CD8-positive, alpha-beta T cell (primary cell): ENCODE measurements at regions of chr5 and their contacts with region 1.

Region 1: DNA sequence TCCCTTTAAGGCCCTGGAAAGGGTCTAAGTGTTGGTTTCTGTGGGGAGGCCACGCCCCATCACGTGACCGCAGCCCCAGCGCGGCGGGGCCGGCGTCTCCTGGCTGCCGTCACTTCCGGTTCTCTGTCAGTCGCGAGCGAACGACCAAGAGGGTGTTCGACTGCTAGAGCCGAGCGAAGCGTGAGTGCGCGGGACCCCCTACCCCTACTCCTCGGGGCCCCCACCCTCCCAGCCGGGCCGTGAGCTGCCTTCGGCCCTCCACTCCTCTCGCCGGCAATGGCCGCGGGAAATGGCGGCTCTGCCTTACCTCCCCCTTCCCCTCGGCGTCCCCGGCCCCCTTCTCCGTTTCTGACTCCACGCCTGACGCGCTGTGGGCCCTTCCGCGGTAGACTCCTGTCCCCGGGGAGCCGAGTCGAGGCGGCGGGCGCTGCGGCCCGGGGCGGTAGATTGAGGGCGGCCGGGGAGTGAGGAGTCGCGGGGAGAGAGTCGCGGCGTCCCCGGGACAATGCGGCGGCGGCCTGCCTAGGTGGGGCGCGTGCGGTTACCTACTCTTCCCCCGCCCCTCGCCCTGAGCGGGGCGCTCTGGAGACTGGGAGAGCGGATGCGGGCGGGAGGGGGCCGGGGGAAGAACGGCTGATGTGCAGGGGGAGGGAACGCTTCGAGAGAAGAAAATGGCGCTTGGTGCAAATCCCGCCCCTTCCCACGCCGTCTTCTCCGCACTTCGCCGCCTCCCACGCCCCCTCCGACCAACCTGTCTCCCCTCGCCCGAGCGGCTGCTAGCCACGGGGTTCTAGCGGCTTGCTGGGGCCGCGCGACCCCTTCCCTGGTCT is at the start of gene SUB1:
- DNase-seq: peak; percentile 89 to 97 (median 95)
- ATAC-seq: peak; percentile 90
- H3K4me3 ChIP-seq: peak within 1 kb of the TSS; percentile 94 to 97
- H3K4me3 Mint-ChIP-seq: peak within 1 kb of the TSS; percentile 96
- H3K27ac ChIP-seq: peak within 1 kb of the TSS; percentile 100
- H3K27ac Mint-ChIP-seq: peak within 1 kb of the TSS; percentile 95
- H3K4me1 ChIP-seq: peaks cover 29% of the 10 kb centered on the region
- H3K4me1 Mint-ChIP-seq: peaks cover 54% of the 10 kb centered on the region
- H3K27me3 ChIP-seq: no peaks in the 10 kb centered on the region
- H3K27me3 Mint-ChIP-seq: no peaks in the 10 kb centered on the region
- CTCF ChIP-seq: no peak
- total RNA-seq, gene SUB1: 361 to 370 TPM

Region 2: GRCh38 chr5:31531888-31532710 is 1053.6 kb before region 1 on chr5 and contains the starts of genes C5orf22 and DROSHA:
- CTCF ChIA-PET with region 1: no interaction called
- POLR2A ChIA-PET with region 1: no interaction called
- intact Hi-C with region 1: loop called (anchors 2 to 5 kb)
- DNase-seq: peak; percentile 72 to 96 (median 91)
- ATAC-seq: peak; percentile 97
- H3K4me3 ChIP-seq: peak within 1 kb of the TSS; percentile 87 to 91
- H3K4me3 Mint-ChIP-seq: peak within 1 kb of the TSS; percentile 99
- H3K27ac ChIP-seq: peak within 1 kb of the TSS; percentile 63 to 75
- H3K27ac Mint-ChIP-seq: peak within 1 kb of the TSS; percentile 92
- H3K4me1 ChIP-seq: peaks cover 34% of the 10 kb centered on the region
- H3K4me1 Mint-ChIP-seq: peaks cover 59% of the 10 kb centered on the region
- H3K27me3 ChIP-seq: no peaks in the 10 kb centered on the region
- H3K27me3 Mint-ChIP-seq: no peaks in the 10 kb centered on the region
- CTCF ChIP-seq: no peak
- total RNA-seq, gene C5orf22: 11.4 to 14.2 TPM
- total RNA-seq, gene DROSHA: 18.6 to 21.6 TPM

Region 3: DNA sequence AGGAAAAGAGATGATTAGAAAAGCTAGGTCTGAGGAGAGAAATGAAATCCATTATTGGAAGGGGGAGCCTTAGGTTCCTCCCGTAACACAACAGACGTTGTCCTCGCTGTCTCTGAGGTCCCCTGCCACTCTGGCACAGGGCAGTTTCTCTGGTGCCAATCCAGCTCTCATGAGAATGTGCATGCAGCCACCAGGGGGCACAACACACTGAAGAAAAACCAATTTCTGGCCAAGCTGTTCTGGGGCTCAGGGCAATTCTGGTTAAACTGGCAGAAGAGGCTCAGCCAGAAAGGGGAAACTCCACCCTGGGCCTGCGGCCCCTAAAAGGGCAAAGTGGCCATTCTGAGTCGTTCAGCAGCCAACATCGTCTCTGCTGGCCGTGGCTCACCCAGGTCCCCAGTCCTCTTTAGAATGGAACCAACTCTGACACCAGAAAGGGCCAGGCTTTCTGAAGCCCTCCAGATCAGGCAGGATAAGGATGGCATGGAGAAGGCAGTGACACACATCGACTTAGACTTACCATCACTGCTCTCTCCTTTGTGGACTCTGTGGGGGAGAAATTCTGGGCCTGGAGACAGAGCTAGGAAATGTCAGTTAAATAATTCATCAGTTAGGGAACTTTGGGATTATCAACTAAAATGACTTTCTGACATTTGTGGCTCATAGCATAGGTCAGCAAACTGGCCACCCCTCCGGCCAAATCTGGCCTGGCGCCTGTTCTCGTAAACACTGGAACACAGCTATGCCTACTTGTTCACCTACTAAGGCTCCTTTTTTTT is 353.0 kb before region 1 on chr5:
- CTCF ChIA-PET with region 1: interaction called, 16 read pairs
- POLR2A ChIA-PET with region 1: no interaction called
- intact Hi-C with region 1: no loop called
- DNase-seq: peak; percentile 54 to 86 (median 76)
- ATAC-seq: peak; percentile 88
- H3K4me3 ChIP-seq: no peak overlapping the region
- H3K4me3 Mint-ChIP-seq: no peak overlapping the region
- H3K27ac ChIP-seq: peak overlapping the region in 1 of 2 experiments; percentile 23
- H3K27ac Mint-ChIP-seq: peak overlapping the region; percentile 79
- H3K4me1 ChIP-seq: no peaks in the 10 kb centered on the region
- H3K4me1 Mint-ChIP-seq: no peaks in the 10 kb centered on the region
- H3K27me3 ChIP-seq: no peaks in the 10 kb centered on the region
- H3K27me3 Mint-ChIP-seq: no peaks in the 10 kb centered on the region
- CTCF ChIP-seq: peak; percentile 61

Region 4: DNA sequence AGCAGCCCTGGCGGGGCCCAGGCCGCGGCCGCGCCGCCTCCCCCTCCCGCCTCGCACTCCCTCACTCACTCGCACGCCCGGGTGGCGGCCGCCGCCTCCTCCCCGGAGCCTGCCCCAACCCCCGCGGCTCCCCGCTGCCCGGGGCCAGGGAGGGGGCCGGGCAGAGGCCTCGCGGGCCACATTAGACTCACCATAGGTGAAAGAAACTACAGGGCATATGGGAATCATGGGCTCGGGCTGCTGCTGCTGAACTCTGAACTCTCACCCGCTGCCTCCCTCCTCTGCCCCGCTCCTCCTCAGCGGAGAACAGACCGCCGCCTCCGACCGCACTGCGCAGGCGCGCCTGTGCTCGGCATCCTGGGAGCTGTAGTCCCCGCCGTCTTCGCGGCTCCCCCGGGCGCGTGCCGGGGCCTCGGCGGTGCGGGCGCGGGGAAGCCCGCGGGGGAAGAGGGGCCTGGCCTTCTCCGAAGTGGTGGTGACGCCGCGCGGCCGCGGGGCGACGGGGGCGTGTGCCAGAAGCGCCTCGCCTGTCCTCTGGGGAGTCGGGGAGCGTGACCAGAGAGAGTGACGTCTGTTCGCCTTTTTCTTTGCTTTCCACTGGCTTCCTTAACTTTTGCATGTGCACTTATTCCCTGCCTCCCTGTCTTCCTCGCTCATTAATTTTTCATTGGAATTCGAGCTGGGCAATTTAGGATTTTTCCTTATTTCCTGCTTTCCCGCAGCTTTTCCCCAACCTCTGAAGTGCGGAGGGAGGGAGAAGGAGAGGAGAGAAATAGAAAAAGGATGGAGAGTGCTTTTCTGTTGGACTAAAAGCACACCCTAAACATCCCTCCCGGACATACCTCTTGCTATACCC is 141.0 kb before region 1 on chr5 and contains the start of gene ZFR:
- CTCF ChIA-PET with region 1: interaction called, 4 read pairs
- POLR2A ChIA-PET with region 1: interaction called, 11 read pairs
- intact Hi-C with region 1: loop called (anchors 1 kb)
- DNase-seq: peak; percentile 86 to 97 (median 92)
- ATAC-seq: peak; percentile 88
- H3K4me3 ChIP-seq: peak within 1 kb of the TSS; percentile 95 to 97
- H3K4me3 Mint-ChIP-seq: peak within 1 kb of the TSS; percentile 90
- H3K27ac ChIP-seq: peak within 1 kb of the TSS; percentile 81 to 90
- H3K27ac Mint-ChIP-seq: peak within 1 kb of the TSS; percentile 95
- H3K4me1 ChIP-seq: peaks cover 30% of the 10 kb centered on the region
- H3K4me1 Mint-ChIP-seq: peaks cover 27% of the 10 kb centered on the region
- H3K27me3 ChIP-seq: no peaks in the 10 kb centered on the region
- H3K27me3 Mint-ChIP-seq: no peaks in the 10 kb centered on the region
- CTCF ChIP-seq: no peak
- total RNA-seq, gene ZFR: 54.0 to 62.9 TPM

Region 5: DNA sequence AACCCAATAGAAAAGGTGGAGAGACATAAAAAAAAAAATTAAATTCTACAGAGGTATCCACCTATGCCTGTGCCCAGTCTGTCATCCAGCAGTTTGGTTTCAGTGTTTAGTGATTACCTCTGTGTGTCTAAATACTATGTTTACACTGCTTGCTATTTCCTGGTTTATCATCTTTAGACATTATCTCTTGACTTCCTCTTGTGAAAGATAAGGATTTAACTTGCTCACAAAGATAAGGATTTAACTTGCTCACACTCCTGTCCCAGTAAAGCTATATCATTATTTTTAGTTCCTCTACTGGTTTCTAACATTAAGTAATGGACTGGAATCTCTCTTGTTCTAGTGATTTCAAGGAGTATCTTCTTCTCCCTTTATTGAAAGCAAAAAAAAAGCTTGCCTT is 87.2 kb before region 1 on chr5:
- CTCF ChIA-PET with region 1: interaction called, 21 read pairs
- POLR2A ChIA-PET with region 1: interaction called, 3 read pairs
- intact Hi-C with region 1: no loop called
- DNase-seq: no peak
- ATAC-seq: no peak
- H3K4me3 ChIP-seq: no peak overlapping the region
- H3K4me3 Mint-ChIP-seq: no peak overlapping the region
- H3K27ac ChIP-seq: no peak overlapping the region
- H3K27ac Mint-ChIP-seq: no peak overlapping the region
- H3K4me1 ChIP-seq: no peaks in the 10 kb centered on the region
- H3K4me1 Mint-ChIP-seq: no peaks in the 10 kb centered on the region
- H3K27me3 ChIP-seq: no peaks in the 10 kb centered on the region
- H3K27me3 Mint-ChIP-seq: peaks cover 9% of the 10 kb centered on the region
- CTCF ChIP-seq: no peak

Region 6: DNA sequence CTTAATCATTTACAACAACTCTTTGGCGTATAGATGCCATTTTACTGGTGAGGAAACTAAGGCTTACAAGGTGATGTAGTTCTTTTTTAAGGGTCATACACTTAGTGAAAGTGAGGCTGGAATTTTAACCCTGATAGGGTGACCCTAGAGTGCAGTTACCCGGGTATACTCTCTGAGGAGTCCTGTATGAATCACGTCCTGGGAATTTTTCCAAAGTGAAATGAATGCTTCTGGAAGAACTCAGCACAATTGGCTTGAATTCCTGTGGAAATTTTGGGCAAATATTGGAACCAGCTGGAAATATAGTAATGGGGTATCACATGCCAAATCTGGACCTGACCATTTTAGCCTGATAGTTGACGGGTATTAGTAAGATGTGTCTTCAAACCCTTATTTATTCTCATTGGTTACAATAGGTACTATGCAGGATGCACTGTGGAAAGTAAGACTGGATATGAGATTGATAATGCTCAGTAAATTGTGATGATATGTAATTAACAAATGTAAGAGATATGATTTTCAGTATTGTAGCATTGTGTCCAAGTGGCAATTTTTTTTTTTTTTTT is 14.5 kb after region 1 on chr5:
- CTCF ChIA-PET with region 1: interaction called, 13 read pairs
- POLR2A ChIA-PET with region 1: no interaction called
- intact Hi-C with region 1: no loop called
- DNase-seq: no peak
- ATAC-seq: no peak
- H3K4me3 ChIP-seq: no peak overlapping the region
- H3K4me3 Mint-ChIP-seq: no peak overlapping the region
- H3K27ac ChIP-seq: no peak overlapping the region
- H3K27ac Mint-ChIP-seq: no peak overlapping the region
- H3K4me1 ChIP-seq: peaks cover 23% of the 10 kb centered on the region
- H3K4me1 Mint-ChIP-seq: peaks cover 67% of the 10 kb centered on the region
- H3K27me3 ChIP-seq: no peaks in the 10 kb centered on the region
- H3K27me3 Mint-ChIP-seq: no peaks in the 10 kb centered on the region
- CTCF ChIP-seq: no peak

Region 7: DNA sequence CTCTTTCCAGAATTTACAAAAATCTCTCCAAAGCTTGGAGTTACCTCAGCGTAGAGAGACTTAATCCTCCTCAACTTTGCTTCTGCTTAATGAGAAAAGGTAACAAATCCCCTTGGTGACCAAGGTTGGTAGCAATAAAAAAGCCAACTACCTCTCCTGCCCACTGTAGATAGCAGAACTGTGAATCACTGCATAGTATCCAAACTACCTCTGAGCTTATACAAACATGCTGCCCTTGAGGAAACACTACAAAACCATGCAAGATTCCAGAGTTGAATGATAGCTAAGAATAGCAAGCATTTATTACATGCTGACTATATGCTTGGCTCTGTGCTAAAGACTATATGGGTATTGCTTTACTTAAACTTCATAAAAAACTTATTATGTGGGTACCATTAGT is 1308.9 kb after region 1 on chr5:
- CTCF ChIA-PET with region 1: no interaction called
- POLR2A ChIA-PET with region 1: no interaction called
- intact Hi-C with region 1: no loop called
- DNase-seq: no peak
- ATAC-seq: no peak
- H3K4me3 ChIP-seq: no peak overlapping the region
- H3K4me3 Mint-ChIP-seq: no peak overlapping the region
- H3K27ac ChIP-seq: no peak overlapping the region
- H3K27ac Mint-ChIP-seq: no peak overlapping the region
- H3K4me1 ChIP-seq: peaks cover 3% of the 10 kb centered on the region
- H3K4me1 Mint-ChIP-seq: peaks cover 13% of the 10 kb centered on the region
- H3K27me3 ChIP-seq: peaks cover 0 to 2% of the 10 kb centered on the region in 2 experiments
- H3K27me3 Mint-ChIP-seq: peaks cover 49% of the 10 kb centered on the region
- CTCF ChIP-seq: no peak